ENCODE measurements at regions of chr17 and their contacts with region 1.

Region 1: DNA sequence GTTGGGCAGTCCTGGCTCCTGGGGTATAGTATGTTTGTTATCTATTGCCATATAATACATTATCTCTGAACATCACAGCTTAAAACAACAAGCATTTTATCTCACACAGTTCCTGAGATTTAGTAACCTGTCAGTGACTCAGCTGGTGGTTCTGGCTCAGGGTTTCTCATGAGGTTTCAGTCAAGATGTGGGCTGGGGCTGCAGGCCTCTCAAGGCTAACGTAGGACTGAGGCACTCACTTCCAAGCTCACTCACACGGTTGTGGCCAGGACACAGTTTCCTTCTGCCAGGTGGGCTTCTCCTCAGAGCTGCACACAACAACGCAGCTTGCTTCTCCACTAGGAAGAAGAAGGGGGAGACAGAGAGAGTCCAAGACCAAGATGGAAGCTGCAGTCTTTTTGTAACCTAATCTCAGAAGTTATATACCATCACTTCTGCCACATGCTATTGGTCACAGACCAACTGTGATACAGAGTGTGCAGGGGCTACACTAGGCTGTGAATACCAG is 10.3 kb upstream of the MED13 start:
- DNase-seq: no peak
- ATAC-seq: peak; percentile 26 to 34; a peak in 2 of 6 replicates
- H3K4me3 ChIP-seq: no peak overlapping the region
- H3K27ac ChIP-seq: no peak overlapping the region
- H3K4me1 ChIP-seq: no peaks in the 10 kb centered on the region
- CTCF ChIP-seq: no peak
- EP300 ChIP-seq: no peak
- POLR2A ChIP-seq: no peak
- RAD21 ChIP-seq: no peak

Region 2: DNA sequence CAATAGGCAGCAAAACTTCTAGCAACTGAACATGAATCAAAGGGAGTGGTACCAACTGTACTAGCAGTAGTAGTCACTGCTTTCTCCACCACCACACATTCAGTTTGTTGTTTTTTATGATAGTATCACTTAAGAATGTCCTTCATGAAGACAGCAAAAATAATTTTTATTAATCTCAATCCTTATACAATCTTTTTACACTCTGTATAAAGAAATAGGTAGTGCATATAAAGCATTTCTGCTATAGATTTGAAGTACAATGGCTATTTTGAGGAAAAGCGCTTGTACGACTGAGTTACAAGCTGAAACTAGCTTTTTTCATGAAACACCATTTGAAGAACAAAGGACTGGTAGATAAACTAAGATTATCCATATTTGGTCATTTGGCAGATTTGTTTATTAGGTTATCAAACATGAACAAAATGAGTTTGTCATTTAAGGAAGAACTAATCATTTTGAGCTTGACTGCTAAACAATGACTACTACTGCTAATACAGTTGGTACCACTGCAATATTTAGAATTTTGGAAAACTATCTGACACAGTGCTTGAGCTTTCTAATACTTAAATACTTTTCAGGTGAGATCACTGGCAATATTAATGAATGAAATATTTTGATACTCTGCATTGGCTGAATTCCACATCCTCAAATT is 57.6 kb before region 1 on chr17:
- CTCF ChIA-PET with region 1: no interaction called
- POLR2A ChIA-PET with region 1: no interaction called
- DNase-seq: peak in 1 of 2 experiments; percentile 14
- ATAC-seq: 0 out of 6 replicates have a peak, but pooled peaks of 1 of the 2 experiments have one; percentile 40
- H3K4me3 ChIP-seq: no peak overlapping the region
- H3K27ac ChIP-seq: no peak overlapping the region
- H3K4me1 ChIP-seq: peaks cover 12% of the 10 kb centered on the region
- CTCF ChIP-seq: no peak
- EP300 ChIP-seq: no peak
- POLR2A ChIP-seq: no peak
- RAD21 ChIP-seq: no peak

Region 3: GRCh38 chr17:62093188-62094155 is 18.1 kb after region 1 on chr17:
- CTCF ChIA-PET with region 1: interaction called, 13 read pairs
- POLR2A ChIA-PET with region 1: no interaction called
- DNase-seq: peak; percentile 88 to 91
- ATAC-seq: peak; percentile 99
- H3K4me3 ChIP-seq: no peak overlapping the region
- H3K27ac ChIP-seq: peak overlapping the region; percentile 67 to 84
- H3K4me1 ChIP-seq: peaks cover 24% of the 10 kb centered on the region
- CTCF ChIP-seq: no peak
- EP300 ChIP-seq: no peak
- POLR2A ChIP-seq: no peak
- RAD21 ChIP-seq: no peak